ENCODE measurements at regions of chr3 and their contacts with region 1.

Region 1: GRCh38 chr3:123884203-123884831 is at the start of gene MYLK:
- DNase-seq: peak; percentile 42
- H3K4me3 ChIP-seq: peak within 1 kb of the TSS; percentile 74
- CTCF ChIP-seq: no peak

Region 2: GRCh38 chr3:123595396-123596180 is 288.7 kb before region 1 on chr3:
- CTCF ChIA-PET with region 1: no interaction called
- POLR2A ChIA-PET with region 1: no interaction called
- DNase-seq: no peak
- H3K4me3 ChIP-seq: no peak overlapping the region
- CTCF ChIP-seq: no peak

Region 3: GRCh38 chr3:123870033-123870432 is 14.3 kb before region 1 on chr3:
- CTCF ChIA-PET with region 1: interaction called, 47 read pairs
- POLR2A ChIA-PET with region 1: interaction called, 3 read pairs
- DNase-seq: no peak
- H3K4me3 ChIP-seq: no peak overlapping the region
- CTCF ChIP-seq: no peak

Measured in AG04449 (cell line).